RWPE1 (cell line): ENCODE measurements at regions of chr1 and their contacts with region 1.

Region 1: DNA sequence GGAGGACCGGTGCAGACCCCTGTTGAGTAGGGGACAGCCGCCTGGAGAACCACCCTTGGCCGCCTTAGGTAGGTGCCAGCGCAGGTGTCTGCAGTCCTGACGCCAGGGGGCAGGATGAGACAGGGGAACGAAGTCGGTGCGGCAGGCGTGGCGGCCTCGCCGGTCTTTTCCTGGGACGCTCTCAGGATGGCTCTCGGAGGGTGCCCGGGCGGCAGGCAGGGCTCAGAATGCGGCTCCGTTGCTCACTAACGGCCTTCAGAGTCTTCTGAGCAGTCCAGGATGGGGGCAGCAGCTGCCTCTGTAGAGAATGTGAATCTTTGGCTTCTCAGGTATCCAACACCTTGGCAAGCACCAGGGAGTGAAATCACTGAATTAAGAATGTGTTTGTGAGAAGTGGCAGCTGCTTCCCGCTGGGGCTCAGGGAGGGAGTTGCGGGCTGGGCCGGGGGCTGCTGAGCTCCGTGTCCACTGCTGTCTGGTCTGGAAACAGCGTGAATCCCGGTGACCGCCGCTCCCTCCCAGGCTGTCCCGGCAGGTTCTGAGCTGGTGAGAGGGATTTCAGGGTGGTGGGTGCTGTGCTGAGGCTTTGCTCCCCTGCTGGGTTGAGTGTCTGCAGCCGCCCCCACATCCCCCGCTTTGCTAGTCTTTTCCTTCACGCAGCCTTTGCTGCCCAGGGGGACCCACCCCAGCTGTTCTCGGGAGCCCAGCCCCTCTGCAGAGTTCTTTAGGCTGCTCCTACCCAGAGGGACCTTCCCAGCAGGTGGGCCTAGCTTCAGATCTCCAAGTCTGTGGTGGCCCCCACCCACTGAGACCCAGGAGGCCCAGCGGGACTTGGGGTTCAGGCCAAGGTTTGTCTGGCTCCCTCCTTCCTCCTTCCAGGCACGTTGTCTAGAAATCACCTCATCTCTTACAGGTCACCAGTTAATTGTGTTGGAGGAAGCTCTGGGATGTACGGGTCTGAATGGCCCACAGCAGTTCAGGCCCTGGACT is 11.1 kb upstream of the C1orf174 start:
- DNase-seq: peak; percentile 80
- H3K27ac ChIP-seq: no peak overlapping the region
- CTCF ChIP-seq: peak; percentile 81

Region 2: GRCh38 chr1:4655674-4656532 is 744.8 kb after region 1 on chr1:
- CTCF ChIA-PET with region 1: interaction called, 16 read pairs
- POLR2A ChIA-PET with region 1: no interaction called
- DNase-seq: peak; percentile 76
- H3K27ac ChIP-seq: peak overlapping the region; percentile 54
- CTCF ChIP-seq: peak; percentile 81